CD4-positive, alpha-beta T cell (primary cell): ENCODE measurements at regions of chr6 and their contacts with region 1.

Region 1: DNA sequence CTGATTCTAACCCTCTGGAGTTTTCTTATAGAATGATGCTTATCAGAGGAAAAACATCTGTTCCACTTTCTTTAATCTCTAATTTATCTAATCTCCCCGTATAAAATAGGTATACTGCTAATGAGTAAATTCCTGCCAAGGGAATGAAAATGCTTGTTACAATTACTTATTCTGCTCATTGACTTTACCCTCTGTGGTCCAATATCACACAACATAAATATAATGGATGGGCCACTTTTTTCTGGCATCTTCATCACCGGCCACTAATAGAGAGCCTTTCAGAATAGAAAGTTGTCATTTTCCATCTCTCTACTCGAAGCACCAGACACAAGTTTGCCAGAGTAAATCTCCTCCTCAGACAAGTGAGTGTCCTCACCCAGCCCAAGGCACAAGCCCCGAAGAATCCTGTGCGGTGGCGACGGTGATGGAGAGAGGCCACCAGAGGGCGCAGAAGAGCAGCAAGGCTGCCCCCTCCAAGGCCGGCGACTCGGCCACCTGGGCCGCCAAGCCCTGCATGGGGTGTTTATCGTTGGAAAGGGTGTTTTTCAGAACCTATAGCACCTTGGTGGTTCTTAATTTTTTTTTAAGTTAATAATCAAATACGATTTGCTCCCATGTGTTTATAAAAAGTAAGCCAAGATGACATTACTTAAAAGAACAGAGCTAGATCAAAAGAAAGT is 212.9 kb upstream of the ARID1B start:
- DNase-seq: peak; percentile 47 to 85 (median 74)
- ATAC-seq: peak; percentile 94
- H3K4me3 ChIP-seq: no peak overlapping the region
- H3K4me3 Mint-ChIP-seq: no peak overlapping the region
- H3K27ac ChIP-seq: no peak overlapping the region
- H3K27ac Mint-ChIP-seq: no peak overlapping the region
- H3K4me1 ChIP-seq: peaks cover 6% of the 10 kb centered on the region
- H3K4me1 Mint-ChIP-seq: peaks cover 4% of the 10 kb centered on the region
- H3K27me3 ChIP-seq: no peaks in the 10 kb centered on the region
- H3K27me3 Mint-ChIP-seq: peaks cover 16% of the 10 kb centered on the region
- CTCF ChIP-seq: peak; percentile 89

Region 2: GRCh38 chr6:156378853-156379252 is 185.4 kb before region 1 on chr6:
- CTCF ChIA-PET with region 1: no interaction called
- POLR2A ChIA-PET with region 1: no interaction called
- intact Hi-C with region 1: loop called in 1 of 2 experiments (anchors 5 kb)
- DNase-seq: peak in 4 of 14 experiments; percentile 21 to 61 (median 48)
- ATAC-seq: peak; percentile 79
- H3K4me3 ChIP-seq: no peak overlapping the region
- H3K4me3 Mint-ChIP-seq: no peak overlapping the region
- H3K27ac ChIP-seq: no peak overlapping the region
- H3K27ac Mint-ChIP-seq: no peak overlapping the region
- H3K4me1 ChIP-seq: peaks cover 2% of the 10 kb centered on the region
- H3K4me1 Mint-ChIP-seq: peaks cover 14% of the 10 kb centered on the region
- H3K27me3 ChIP-seq: no peaks in the 10 kb centered on the region
- H3K27me3 Mint-ChIP-seq: no peaks in the 10 kb centered on the region
- CTCF ChIP-seq: peak; percentile 50

Region 3: GRCh38 chr6:156686995-156687788 is 122.9 kb after region 1 on chr6:
- CTCF ChIA-PET with region 1: interaction called, 4 read pairs
- POLR2A ChIA-PET with region 1: no interaction called
- intact Hi-C with region 1: loop called (anchors 2 kb)
- DNase-seq: peak; percentile 53 to 94 (median 76)
- ATAC-seq: peak; percentile 76
- H3K4me3 ChIP-seq: peak overlapping the region; percentile 82
- H3K4me3 Mint-ChIP-seq: peak overlapping the region; percentile 92
- H3K27ac ChIP-seq: peak overlapping the region; percentile 91 to 97
- H3K27ac Mint-ChIP-seq: peak overlapping the region; percentile 92
- H3K4me1 ChIP-seq: peaks cover 14% of the 10 kb centered on the region
- H3K4me1 Mint-ChIP-seq: peaks cover 24% of the 10 kb centered on the region
- H3K27me3 ChIP-seq: no peaks in the 10 kb centered on the region
- H3K27me3 Mint-ChIP-seq: no peaks in the 10 kb centered on the region
- CTCF ChIP-seq: no peak

Region 4: DNA sequence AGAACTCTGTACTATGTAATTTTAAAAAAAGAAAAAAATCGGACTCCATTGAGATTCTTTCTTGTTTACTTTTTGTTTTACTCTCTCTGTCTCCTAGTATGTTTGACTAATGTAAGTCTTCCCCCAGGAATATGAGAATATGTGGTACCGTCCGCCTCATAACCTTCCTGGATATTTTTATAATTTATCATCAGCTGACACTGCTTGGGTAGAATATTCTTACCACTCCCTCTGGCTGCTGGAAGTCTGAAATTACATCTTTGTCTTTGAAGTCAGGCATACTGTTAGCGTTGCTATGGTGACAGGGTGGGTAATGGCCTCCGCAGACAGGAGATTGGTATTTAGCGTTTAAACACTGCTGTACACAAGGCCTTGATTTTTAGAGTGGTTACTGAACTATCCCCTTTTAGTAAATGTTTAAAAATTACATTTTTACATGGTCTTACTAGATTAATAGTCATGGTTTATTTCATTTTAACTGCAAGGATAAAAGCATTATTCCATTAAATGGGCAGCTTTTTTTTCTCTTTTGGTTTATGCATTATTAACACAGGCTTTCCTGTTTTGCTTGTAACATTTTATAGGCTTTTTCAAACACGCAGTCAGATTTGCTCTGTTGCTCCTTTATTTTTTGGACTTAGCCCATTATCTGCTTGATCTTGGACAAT is 389.3 kb after region 1 on chr6:
- CTCF ChIA-PET with region 1: no interaction called
- POLR2A ChIA-PET with region 1: no interaction called
- intact Hi-C with region 1: loop called (anchors 10 kb)
- DNase-seq: peak in 10 of 14 experiments; percentile 13 to 89 (median 42)
- ATAC-seq: peak; percentile 99
- H3K4me3 ChIP-seq: no peak overlapping the region
- H3K4me3 Mint-ChIP-seq: no peak overlapping the region
- H3K27ac ChIP-seq: no peak overlapping the region
- H3K27ac Mint-ChIP-seq: peak overlapping the region; percentile 66
- H3K4me1 ChIP-seq: peaks cover 29% of the 10 kb centered on the region
- H3K4me1 Mint-ChIP-seq: peaks cover 85% of the 10 kb centered on the region
- H3K27me3 ChIP-seq: no peaks in the 10 kb centered on the region
- H3K27me3 Mint-ChIP-seq: no peaks in the 10 kb centered on the region
- CTCF ChIP-seq: peak; percentile 18

Region 5: DNA sequence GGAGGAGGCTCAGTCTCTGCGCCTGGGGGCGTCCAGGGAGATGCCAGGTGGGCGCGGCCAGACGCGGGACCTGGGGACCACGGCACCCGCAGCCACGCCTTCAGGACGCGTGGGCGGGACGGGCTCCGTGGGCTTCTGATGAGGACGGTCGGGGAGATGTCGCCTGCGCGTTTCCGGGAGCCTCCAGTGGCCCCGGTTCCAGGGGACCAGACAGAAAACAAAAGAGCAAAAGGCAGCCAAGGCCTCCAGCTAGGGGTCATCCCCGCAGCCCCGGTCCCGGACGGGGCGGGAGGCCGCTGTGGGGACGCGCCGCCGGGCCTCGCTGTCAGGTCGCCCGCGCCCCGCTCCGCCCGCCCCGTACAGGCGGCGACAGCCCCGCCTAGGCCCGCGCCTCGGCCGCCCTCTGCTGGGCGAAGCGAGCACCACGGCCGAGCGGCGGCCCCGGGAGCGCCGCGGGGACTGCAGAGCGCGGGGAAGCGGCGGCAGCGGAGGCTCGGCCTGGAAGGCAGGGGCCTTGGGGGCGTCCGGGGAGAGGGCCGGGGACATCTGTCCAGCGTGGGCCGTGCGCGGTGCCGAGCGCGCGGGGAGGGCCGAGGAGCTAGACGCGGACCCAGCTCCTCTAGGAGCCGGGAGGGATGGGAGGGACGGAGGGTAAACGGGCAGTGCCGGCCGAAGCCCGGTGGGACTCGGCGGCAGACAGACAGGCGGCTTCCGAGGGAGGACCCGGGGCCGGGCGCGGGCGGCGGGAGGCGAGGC is 710.4 kb after region 1 on chr6:
- CTCF ChIA-PET with region 1: no interaction called
- POLR2A ChIA-PET with region 1: no interaction called
- intact Hi-C with region 1: loop called in 1 of 2 experiments (anchors 5 kb)
- DNase-seq: peak; percentile 67 to 94 (median 78)
- ATAC-seq: peak; percentile 83
- H3K4me3 ChIP-seq: peak overlapping the region; percentile 74
- H3K4me3 Mint-ChIP-seq: peak overlapping the region; percentile 97
- H3K27ac ChIP-seq: peak overlapping the region; percentile 70 to 79
- H3K27ac Mint-ChIP-seq: peak overlapping the region; percentile 98
- H3K4me1 ChIP-seq: peaks cover 17% of the 10 kb centered on the region
- H3K4me1 Mint-ChIP-seq: peaks cover 13% of the 10 kb centered on the region
- H3K27me3 ChIP-seq: no peaks in the 10 kb centered on the region
- H3K27me3 Mint-ChIP-seq: no peaks in the 10 kb centered on the region
- CTCF ChIP-seq: peak; percentile 56